ENCODE measurements at regions of chr5 and their contacts with region 1.

Region 1: GRCh38 chr5:181181650-181182565 is 23.1 kb downstream of the TRIM7 start:
- DNase-seq: peak; percentile 84
- H3K4me3 Mint-ChIP-seq: no peak overlapping the region
- H3K27ac Mint-ChIP-seq: no peak overlapping the region
- H3K4me1 Mint-ChIP-seq: peaks cover 28% of the 10 kb centered on the region
- H3K27me3 Mint-ChIP-seq: peaks cover 17% of the 10 kb centered on the region
- CTCF ChIP-seq: peak; percentile 87

Region 2: GRCh38 chr5:181100121-181101015 is 81.5 kb before region 1 on chr5:
- CTCF ChIA-PET with region 1: no interaction called
- intact Hi-C with region 1: no loop called
- DNase-seq: no peak
- H3K4me3 Mint-ChIP-seq: no peak overlapping the region
- H3K27ac Mint-ChIP-seq: no peak overlapping the region
- H3K4me1 Mint-ChIP-seq: peaks cover 14% of the 10 kb centered on the region
- H3K27me3 Mint-ChIP-seq: peaks cover 37% of the 10 kb centered on the region
- CTCF ChIP-seq: no peak

Region 3: DNA sequence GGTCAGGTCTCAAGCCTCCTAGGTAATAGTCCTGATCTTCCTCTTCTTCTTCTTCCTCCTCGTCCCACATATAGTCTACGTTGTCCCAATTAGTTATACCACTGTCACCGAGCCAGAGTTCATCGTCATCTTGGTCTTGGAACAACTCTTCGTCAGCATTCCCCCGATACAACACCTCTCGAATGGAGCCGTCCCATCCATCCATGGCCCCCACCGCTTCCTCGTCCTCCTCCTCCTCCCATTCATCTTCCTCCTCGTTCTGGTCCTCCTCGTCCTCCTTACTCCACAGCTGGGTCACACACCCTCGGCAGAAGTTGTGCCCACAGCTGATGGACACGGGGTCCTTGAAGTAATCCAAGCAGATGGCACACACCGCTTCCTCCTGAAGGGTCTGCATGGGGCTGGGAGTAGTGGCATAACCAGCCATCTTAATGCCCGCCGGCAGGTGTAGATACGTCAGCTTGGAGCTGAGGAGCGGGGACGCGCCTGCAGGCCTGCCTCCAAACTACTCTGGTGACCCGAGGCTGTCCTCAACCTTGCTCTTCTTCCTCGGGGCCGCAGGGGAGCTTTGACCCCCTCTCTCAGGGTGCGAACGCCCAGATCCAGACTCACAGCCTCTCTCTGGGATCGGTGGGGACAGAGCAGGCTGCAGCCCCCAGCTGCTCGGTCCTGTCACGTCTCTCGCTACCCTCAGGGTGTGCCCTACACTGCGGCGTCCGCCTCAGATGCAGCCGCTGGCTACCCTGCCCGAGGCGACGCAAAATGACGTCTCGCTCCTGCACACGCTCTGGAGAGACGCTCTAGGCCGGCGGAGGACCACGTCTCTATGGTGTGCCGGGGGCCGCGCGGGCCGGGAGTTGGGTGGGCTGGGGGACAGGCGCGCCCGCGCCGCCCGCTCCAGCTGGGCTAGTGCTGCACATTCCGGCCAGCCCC is 78.7 kb after region 1 on chr5 and contains the start of gene TRIM52:
- CTCF ChIA-PET with region 1: interaction called, 4 read pairs
- intact Hi-C with region 1: loop called (anchors 5 kb)
- DNase-seq: peak; percentile 91
- H3K4me3 Mint-ChIP-seq: peak within 1 kb of the TSS; percentile 89
- H3K27ac Mint-ChIP-seq: peak within 1 kb of the TSS; percentile 81
- H3K4me1 Mint-ChIP-seq: peaks cover 30% of the 10 kb centered on the region
- H3K27me3 Mint-ChIP-seq: no peaks in the 10 kb centered on the region
- CTCF ChIP-seq: no peak
- total RNA-seq, gene TRIM52: 14.8 and 14.9 TPM in 2 replicates